ENCODE measurements at regions of chr12 and their contacts with region 1.

Region 1: GRCh38 chr12:101407436-101408345 is at the start of gene ARL1:
- ATAC-seq: peak; percentile 86 to 92 (median 90)
- H3K4me3 ChIP-seq: peak within 1 kb of the TSS; percentile 70 to 98 (median 87)
- H3K27ac ChIP-seq: peak within 1 kb of the TSS; percentile 100
- H3K4me1 ChIP-seq: peaks cover 9 to 16% of the 10 kb centered on the region in 2 donors
- total RNA-seq, gene ARL1: 31.8 to 93.9 (median 53.4) TPM

Region 2: DNA sequence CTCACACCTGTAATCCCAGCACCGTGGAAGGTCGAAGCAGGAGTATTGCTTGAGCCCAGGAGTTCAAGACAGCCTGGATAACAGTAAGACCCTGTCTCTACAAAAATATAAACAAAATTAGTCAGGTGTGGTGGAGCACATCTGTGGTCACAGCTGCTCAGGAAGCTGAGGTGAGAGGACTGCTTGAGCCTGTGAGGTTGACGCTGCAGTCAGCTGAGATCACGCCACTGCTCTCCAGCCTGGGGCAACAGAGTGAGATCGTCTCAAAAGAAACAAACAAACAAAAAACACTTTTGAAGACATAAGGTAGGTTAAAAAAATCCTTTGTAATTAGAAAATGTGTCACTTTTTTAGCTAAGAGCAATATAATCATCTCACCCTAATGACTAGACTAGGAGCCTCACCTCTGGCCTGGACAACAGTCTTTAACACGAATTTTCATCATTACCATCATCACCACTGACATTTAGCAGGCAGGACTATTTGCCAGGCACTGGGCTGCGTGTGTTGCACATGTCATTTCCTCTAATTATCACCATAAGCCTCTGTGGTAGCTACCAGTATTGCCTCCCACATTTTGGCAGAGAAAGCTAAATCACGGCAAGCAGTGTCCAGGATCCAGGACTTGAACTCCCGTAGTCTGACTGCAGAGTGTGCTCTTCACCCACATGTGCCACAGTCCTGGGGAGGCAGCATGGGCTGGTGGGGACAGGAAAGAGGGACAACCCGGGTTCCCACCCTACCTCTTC is 336.2 kb after region 1 on chr12:
- in situ Hi-C with region 1: loop called in 1 of 9 experiments (anchors 25 kb)
- ATAC-seq: no peak
- H3K4me3 ChIP-seq: no peak overlapping the region
- H3K27ac ChIP-seq: no peak overlapping the region
- H3K4me1 ChIP-seq: no peaks in the 10 kb centered on the region

Region 3: DNA sequence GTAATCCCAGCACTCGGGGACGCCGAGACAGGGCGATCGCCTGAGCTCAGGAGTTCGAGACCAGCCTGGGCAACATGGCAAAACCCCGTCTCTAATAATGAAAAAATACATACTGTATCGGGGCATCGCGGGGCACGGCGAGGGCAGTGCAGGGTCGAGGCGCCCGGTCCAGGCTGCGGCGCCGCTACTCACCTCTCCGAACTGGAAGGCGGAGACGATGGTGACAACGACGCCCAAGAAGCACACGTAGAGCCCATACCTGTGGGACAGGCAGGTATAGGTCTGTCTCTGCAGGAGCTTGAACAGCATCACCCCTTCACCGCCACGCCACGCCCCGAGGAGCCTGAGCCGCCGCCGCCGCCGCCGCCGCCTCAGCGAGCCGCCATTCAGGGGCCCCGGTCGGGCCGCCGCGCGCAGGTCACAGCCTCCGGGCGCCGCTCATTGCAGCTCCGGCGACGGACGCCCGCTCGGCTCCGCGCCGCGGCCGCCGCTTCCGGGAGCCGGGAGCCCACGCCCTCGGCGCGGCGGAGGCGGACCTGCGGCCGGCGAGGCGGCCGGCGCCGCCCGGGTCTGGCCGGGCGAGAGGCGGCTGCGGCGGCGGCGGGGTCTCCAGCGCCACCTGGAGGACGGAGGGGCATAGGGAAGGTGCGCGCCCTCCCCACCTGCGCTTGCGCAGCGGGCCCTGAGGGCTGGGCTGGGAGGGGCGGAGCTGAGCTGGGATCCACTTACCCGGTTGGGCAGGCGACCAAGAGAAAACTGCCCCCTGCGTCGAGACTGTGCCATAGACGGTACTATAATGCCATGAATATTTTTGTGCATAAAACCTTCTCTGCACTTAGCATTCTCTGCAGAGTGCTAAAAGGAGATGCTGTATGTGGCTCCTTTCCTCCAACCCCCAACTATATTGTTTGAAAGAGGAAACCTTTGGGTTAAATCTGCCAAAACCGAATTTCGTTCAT is 423.0 kb after region 1 on chr12 and contains the start of gene GNPTAB:
- in situ Hi-C with region 1: loop called in 2 of 9 experiments (anchors 10 to 25 kb)
- ATAC-seq: peak; percentile 92 to 97 (median 95)
- H3K4me3 ChIP-seq: peak within 1 kb of the TSS; percentile 80 to 92 (median 89)
- H3K27ac ChIP-seq: peak within 1 kb of the TSS; percentile 71 to 78
- H3K4me1 ChIP-seq: peaks cover 0 to 3% of the 10 kb centered on the region in 2 donors
- total RNA-seq, gene GNPTAB: 15.2 to 49.0 (median 41.5) TPM

Measured in motor neuron (in vitro differentiated cells).